Naive thymus-derived CD4-positive, alpha-beta T cell (primary cell): ENCODE measurements at regions of chrX and their contacts with region 1.

Region 1: DNA sequence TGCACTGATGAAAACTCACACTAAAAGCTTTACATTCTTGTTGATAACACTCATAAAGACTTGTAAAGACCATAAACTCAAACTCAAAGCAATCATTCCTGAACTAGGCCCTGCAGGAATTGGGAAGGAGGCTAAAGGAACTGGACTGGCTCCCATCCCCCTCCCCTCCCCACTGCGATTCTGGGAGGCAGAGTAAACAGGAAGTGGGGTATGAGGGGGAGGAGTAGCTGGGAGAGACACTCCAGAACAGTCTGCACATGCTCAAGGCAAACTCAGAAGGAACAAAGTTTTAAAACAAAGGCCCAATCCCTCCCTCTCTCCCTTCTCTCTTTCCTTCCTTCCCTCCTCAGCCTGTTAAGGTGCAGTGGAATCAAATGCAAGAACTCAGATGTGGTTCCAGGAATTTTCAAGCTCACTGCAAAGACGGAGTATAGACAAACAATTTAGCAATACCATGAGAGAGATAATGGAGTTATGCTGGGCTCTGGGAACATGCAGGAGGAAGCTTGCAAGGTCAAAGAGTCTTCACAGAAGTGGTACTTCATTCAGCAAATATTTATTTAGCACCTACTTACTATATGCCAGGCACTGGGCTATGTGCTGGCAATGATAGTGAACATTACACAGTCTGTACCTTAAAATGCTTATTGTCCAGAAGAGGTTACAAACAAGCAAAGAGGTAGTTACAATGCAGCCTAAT is 15.9 kb downstream of the MID1IP1 start:
- DNase-seq: peak in 1 of 9 donors; percentile 16
- ATAC-seq: peak; percentile 42
- H3K4me3 ChIP-seq: no peak overlapping the region
- H3K4me3 Mint-ChIP-seq: peak overlapping the region in 3 of 10 donors; percentile 26 to 62 (median 44)
- H3K27ac ChIP-seq: peak overlapping the region; percentile 50
- H3K27ac Mint-ChIP-seq: no peak overlapping the region
- H3K4me1 ChIP-seq: peaks cover 35 to 54% of the 10 kb centered on the region in 2 donors
- H3K4me1 Mint-ChIP-seq: peaks cover 11 to 31% (median 21%) of the 10 kb centered on the region in 7 donors
- H3K27me3 ChIP-seq: no peaks in the 10 kb centered on the region
- H3K27me3 Mint-ChIP-seq: no peaks in the 10 kb centered on the region

Region 2: GRCh38 chrX:38347136-38347535 is 470.0 kb before region 1 on chrX:
- CTCF ChIA-PET with region 1: no interaction called
- POLR2A ChIA-PET with region 1: no interaction called
- intact Hi-C with region 1: no loop called
- DNase-seq: no peak
- ATAC-seq: peak; percentile 74
- H3K4me3 ChIP-seq: no peak overlapping the region
- H3K4me3 Mint-ChIP-seq: no peak overlapping the region
- H3K27ac ChIP-seq: no peak overlapping the region
- H3K27ac Mint-ChIP-seq: no peak overlapping the region
- H3K4me1 ChIP-seq: no peaks in the 10 kb centered on the region
- H3K4me1 Mint-ChIP-seq: no peaks in the 10 kb centered on the region
- H3K27me3 ChIP-seq: no peaks in the 10 kb centered on the region
- H3K27me3 Mint-ChIP-seq: peaks cover 4 to 17% (median 10%) of the 10 kb centered on the region in 5 donors

Region 3: DNA sequence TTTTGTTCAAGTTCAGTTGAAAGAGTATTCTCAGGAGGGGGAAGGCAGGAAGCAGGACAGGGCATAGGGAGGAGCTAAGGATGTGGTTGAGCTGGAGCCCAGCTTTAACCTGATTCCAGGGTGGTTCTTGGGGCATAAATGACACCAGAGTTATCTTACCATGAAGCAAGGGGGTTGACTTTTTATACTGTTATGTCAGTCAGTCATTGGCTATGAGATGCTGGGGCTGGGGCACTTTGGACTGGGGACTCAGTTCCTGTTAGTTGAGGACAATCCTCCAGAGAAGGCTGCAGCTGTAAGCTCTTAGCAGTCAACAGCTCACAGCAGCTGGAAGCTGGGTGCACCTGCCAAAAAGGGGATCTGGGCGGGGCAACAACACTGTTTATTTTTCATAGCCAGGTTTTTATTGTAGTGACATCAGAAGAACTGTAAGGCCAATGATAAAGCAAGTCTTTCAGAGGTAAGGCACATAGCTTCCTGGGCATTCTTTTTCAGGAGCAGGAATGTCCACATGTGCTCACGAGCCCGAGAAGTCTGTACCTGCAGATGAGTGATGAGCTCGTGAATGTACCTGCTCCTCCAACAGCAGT is 62.6 kb after region 1 on chrX:
- CTCF ChIA-PET with region 1: no interaction called
- POLR2A ChIA-PET with region 1: interaction called, 5 read pairs
- intact Hi-C with region 1: loop called in 1 of 2 experiments (anchors 5 kb)
- DNase-seq: peak in 7 of 9 donors; percentile 8 to 47 (median 29)
- ATAC-seq: peak; percentile 61
- H3K4me3 ChIP-seq: no peak overlapping the region
- H3K4me3 Mint-ChIP-seq: peak overlapping the region; percentile 14 to 65 (median 56)
- H3K27ac ChIP-seq: no peak overlapping the region
- H3K27ac Mint-ChIP-seq: peak overlapping the region in 8 of 9 donors; percentile 8 to 73 (median 46)
- H3K4me1 ChIP-seq: peaks cover 0 to 14% of the 10 kb centered on the region in 2 donors
- H3K4me1 Mint-ChIP-seq: peaks cover 11 to 25% (median 23%) of the 10 kb centered on the region in 7 donors
- H3K27me3 ChIP-seq: no peaks in the 10 kb centered on the region
- H3K27me3 Mint-ChIP-seq: no peaks in the 10 kb centered on the region